B cell (primary cell): ENCODE measurements at regions of chr17 and their contacts with region 1.

Region 1: GRCh38 chr17:20706751-20707374 is 127.3 kb downstream of the CDRT15L2 start:
- DNase-seq: no peak
- ATAC-seq: no peak
- H3K4me3 ChIP-seq: no peak overlapping the region
- H3K4me3 Mint-ChIP-seq: no peak overlapping the region
- H3K27ac ChIP-seq: no peak overlapping the region
- H3K27ac Mint-ChIP-seq: no peak overlapping the region
- H3K4me1 ChIP-seq: peaks cover 0 to 3% of the 10 kb centered on the region in 2 donors
- H3K4me1 Mint-ChIP-seq: peaks cover 18% of the 10 kb centered on the region
- H3K27me3 ChIP-seq: no peaks in the 10 kb centered on the region
- H3K27me3 Mint-ChIP-seq: peaks cover 3% of the 10 kb centered on the region
- CTCF ChIP-seq: no peak

Region 2: GRCh38 chr17:20774472-20775135 is 67.7 kb after region 1 on chr17:
- CTCF ChIA-PET with region 1: no interaction called
- POLR2A ChIA-PET with region 1: no interaction called
- intact Hi-C with region 1: loop called (anchors 10 kb)
- DNase-seq: no peak
- ATAC-seq: no peak
- H3K4me3 ChIP-seq: no peak overlapping the region
- H3K4me3 Mint-ChIP-seq: no peak overlapping the region
- H3K27ac ChIP-seq: no peak overlapping the region
- H3K27ac Mint-ChIP-seq: no peak overlapping the region
- H3K4me1 ChIP-seq: peaks cover 0 to 4% of the 10 kb centered on the region in 2 donors
- H3K4me1 Mint-ChIP-seq: peaks cover 9% of the 10 kb centered on the region
- H3K27me3 ChIP-seq: no peaks in the 10 kb centered on the region
- H3K27me3 Mint-ChIP-seq: no peaks in the 10 kb centered on the region
- CTCF ChIP-seq: no peak

Region 3: DNA sequence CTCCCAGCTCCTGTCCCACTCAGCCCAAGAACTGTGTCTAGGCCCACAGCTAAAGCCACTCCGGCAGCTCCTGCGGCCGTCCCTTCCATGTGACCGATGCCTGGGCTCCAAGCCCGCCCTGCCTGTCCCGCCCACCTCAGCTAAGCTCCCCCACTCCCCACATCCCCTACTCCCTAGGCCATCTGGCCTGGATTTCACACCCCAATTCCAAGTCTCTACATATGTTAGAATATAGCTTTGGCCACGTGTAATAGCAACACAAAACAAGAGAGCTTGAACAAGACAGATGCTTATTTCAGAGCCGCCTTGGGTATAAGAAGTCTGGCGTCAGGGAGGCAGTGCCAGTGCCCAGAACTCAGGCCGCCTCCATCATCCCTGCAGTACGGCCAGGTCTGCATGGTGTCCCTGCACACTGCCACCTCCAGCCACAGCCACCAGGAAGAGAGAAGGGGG is 365.9 kb after region 1 on chr17:
- CTCF ChIA-PET with region 1: no interaction called
- POLR2A ChIA-PET with region 1: no interaction called
- intact Hi-C with region 1: no loop called
- DNase-seq: no peak
- ATAC-seq: no peak
- H3K4me3 ChIP-seq: no peak overlapping the region
- H3K4me3 Mint-ChIP-seq: no peak overlapping the region
- H3K27ac ChIP-seq: no peak overlapping the region
- H3K27ac Mint-ChIP-seq: no peak overlapping the region
- H3K4me1 ChIP-seq: no peaks in the 10 kb centered on the region
- H3K4me1 Mint-ChIP-seq: no peaks in the 10 kb centered on the region
- H3K27me3 ChIP-seq: no peaks in the 10 kb centered on the region
- H3K27me3 Mint-ChIP-seq: no peaks in the 10 kb centered on the region
- CTCF ChIP-seq: no peak